Activated CD4-positive, alpha-beta T cell treated with anti-CD3 and anti-CD28 coated beads, Interleukin-2, amount 10 ng/mL, durations not matched to agents 24 days and 14 days (primary cell): ENCODE measurements at regions of chr20 and their contacts with region 1.

Region 1: GRCh38 chr20:57498425-57499400 is 26.2 kb downstream of the CTCFL start:
- DNase-seq: peak; percentile 66
- H3K4me3 Mint-ChIP-seq: no peak overlapping the region
- H3K27ac Mint-ChIP-seq: no peak overlapping the region
- H3K4me1 Mint-ChIP-seq: peaks cover 11% of the 10 kb centered on the region
- H3K27me3 Mint-ChIP-seq: peaks cover 51% of the 10 kb centered on the region

Region 2: GRCh38 chr20:57089691-57090150 is 409.0 kb before region 1 on chr20:
- intact Hi-C with region 1: loop called (anchors 5 kb)
- DNase-seq: peak; percentile 89
- H3K4me3 Mint-ChIP-seq: no peak overlapping the region
- H3K27ac Mint-ChIP-seq: peak overlapping the region; percentile 81
- H3K4me1 Mint-ChIP-seq: peaks cover 11% of the 10 kb centered on the region
- H3K27me3 Mint-ChIP-seq: peaks cover 7% of the 10 kb centered on the region

Region 3: DNA sequence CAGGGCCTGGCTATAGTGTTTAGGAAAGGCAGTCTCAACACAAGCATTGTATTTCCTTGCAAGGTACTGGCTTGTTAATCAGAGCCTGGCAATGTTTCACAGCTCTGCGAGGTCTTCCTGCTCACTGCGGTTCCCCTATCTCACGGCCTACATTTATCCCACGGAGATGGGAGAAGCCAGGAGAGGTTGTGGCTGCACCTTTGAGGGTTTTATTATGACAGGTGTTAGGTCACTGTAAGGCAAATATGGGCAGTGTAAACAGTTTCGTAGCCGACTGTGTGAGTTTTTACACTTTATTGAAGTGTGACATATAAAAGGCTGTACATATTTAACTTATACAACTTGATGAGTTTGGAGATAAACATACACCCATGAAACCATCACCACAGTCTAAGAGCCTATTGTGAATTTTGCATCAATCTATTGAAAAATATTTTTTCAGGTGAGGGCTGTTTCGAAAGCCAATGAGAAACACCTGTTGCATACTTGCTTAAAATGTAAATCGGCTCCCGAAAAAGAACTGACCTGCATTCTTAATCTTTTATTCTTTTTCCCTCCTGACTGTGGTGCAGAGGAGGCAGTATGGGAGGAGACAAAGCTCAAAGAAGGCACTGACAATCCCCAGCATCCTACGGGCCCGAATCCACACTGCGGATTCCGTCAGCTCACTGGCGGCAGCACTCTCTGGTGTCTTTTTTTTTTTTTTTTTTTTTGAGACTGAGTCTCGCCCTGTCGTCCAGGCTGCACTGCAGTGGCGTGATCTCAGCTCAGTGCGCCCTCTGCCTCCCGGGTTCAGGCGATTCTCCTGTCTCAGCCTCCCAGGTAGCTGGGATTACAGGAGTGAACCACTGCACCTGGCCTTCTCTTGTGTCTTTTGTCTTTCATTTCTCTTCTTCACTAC is 115.0 kb before region 1 on chr20:
- intact Hi-C with region 1: loop called (anchors 1 kb)
- DNase-seq: no peak
- H3K4me3 Mint-ChIP-seq: no peak overlapping the region
- H3K27ac Mint-ChIP-seq: no peak overlapping the region
- H3K4me1 Mint-ChIP-seq: peaks cover 15% of the 10 kb centered on the region
- H3K27me3 Mint-ChIP-seq: no peaks in the 10 kb centered on the region

Region 4: GRCh38 chr20:57432874-57433491 is 65.7 kb before region 1 on chr20:
- intact Hi-C with region 1: loop called (anchors 10 kb)
- DNase-seq: peak; percentile 93
- H3K4me3 Mint-ChIP-seq: peak overlapping the region; percentile 66
- H3K27ac Mint-ChIP-seq: peak overlapping the region; percentile 84
- H3K4me1 Mint-ChIP-seq: peaks cover 51% of the 10 kb centered on the region
- H3K27me3 Mint-ChIP-seq: no peaks in the 10 kb centered on the region